ENCODE measurements at regions of chr1 and their contacts with region 1.

Region 1: DNA sequence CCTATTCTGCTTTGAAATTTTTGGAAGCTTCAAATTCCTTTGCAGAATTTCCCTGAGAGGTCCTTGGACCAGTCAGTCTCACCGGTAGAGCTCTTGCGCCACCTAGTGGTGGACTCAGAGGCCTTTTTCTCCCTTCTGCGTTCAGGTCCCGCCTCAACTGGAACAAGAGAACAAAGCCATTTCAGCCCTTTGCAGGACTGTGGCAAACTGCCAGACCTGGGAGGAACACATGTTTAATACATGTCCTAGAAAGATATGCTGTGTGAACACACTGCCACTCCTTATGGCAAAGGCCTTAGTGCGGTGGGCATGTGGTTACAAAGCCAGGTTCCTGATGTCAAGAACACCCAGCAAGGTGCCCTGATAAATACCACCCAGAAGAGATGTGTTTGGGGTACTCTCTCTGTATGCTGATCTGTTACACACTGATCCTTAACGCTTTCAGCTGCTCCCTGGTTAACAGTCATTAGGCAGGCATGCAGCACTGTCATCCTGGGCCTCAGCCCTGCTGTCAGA is 82.2 kb upstream of the SSX2IP start:
- DNase-seq: peak; percentile 76 to 96
- H3K4me3 ChIP-seq: no peak overlapping the region
- CTCF ChIP-seq: peak in 1 of 3 donors; percentile 28
- POLR2A ChIP-seq: no peak

Region 2: GRCh38 chr1:84732520-84732919 is 40.0 kb before region 1 on chr1:
- intact Hi-C with region 1: loop called (anchors 2 kb)
- DNase-seq: no peak
- H3K4me3 ChIP-seq: no peak overlapping the region
- CTCF ChIP-seq: no peak
- POLR2A ChIP-seq: no peak

Measured in lower leg skin (tissue), 4 donors.